Endothelial cell of umbilical vein (primary cell): ENCODE measurements at regions of chr4 and their contacts with region 1.

Region 1: GRCh38 chr4:40897557-40898203 is 147.9 kb downstream of the NSUN7 start:
- DNase-seq: peak; percentile 74
- H3K4me3 ChIP-seq: no peak overlapping the region
- H3K27ac ChIP-seq: no peak overlapping the region
- H3K4me1 ChIP-seq: no peaks in the 10 kb centered on the region
- H3K27me3 ChIP-seq: no peaks in the 10 kb centered on the region
- CTCF ChIP-seq: peak; percentile 80 to 81
- POLR2A ChIP-seq: no peak

Region 2: GRCh38 chr4:40736910-40737309 is 160.8 kb before region 1 on chr4:
- CTCF ChIA-PET with region 1: interaction called, 18 read pairs
- POLR2A ChIA-PET with region 1: no interaction called
- dilution Hi-C with region 1: no loop called
- intact Hi-C with region 1: loop called (anchors 1 kb)
- DNase-seq: peak; percentile 30
- H3K4me3 ChIP-seq: no peak overlapping the region
- H3K27ac ChIP-seq: no peak overlapping the region
- H3K4me1 ChIP-seq: no peaks in the 10 kb centered on the region
- H3K27me3 ChIP-seq: peaks cover 0 to 4% of the 10 kb centered on the region in 2 experiments
- CTCF ChIP-seq: no peak
- POLR2A ChIP-seq: no peak

Region 3: DNA sequence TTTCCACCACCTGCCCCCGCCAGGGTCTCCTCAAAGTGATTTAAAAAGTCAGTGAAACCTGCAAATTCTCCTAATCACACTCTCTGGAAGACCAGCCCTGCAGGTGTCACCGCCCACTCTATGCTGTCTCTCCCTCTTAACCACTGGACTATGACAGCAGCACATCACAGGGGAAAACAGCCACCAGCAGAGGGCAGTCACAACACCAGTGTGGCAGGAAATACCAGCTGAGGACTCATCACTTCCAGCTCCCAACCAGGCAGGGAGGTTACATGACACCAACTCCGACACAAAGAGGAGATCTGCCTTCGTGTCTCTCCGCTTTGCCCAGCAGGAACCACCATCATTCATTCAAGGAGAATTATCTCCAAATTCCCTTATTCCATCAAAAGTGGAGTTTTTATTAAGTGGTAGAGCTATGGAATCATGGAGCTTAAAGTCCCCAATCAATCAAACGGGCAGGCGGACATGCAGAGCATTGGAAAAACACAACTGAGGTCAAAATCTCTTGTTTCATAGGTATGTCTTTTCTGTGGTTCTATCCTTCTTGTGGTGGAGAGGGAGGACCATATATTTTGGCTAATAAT is 56.6 kb before region 1 on chr4:
- CTCF ChIA-PET with region 1: interaction called, 16 read pairs
- POLR2A ChIA-PET with region 1: no interaction called
- dilution Hi-C with region 1: no loop called
- intact Hi-C with region 1: loop called (anchors 1 kb)
- DNase-seq: peak; percentile 83
- H3K4me3 ChIP-seq: no peak overlapping the region
- H3K27ac ChIP-seq: peak overlapping the region; percentile 50
- H3K4me1 ChIP-seq: peaks cover 4% of the 10 kb centered on the region
- H3K27me3 ChIP-seq: no peaks in the 10 kb centered on the region
- CTCF ChIP-seq: peak; percentile 76 to 95
- POLR2A ChIP-seq: no peak

Region 4: GRCh38 chr4:40887288-40888131 is 10.2 kb before region 1 on chr4:
- CTCF ChIA-PET with region 1: interaction called, 19 read pairs
- POLR2A ChIA-PET with region 1: interaction called, 4 read pairs
- dilution Hi-C with region 1: no loop called
- intact Hi-C with region 1: no loop called
- DNase-seq: no peak
- H3K4me3 ChIP-seq: no peak overlapping the region
- H3K27ac ChIP-seq: no peak overlapping the region
- H3K4me1 ChIP-seq: no peaks in the 10 kb centered on the region
- H3K27me3 ChIP-seq: no peaks in the 10 kb centered on the region
- CTCF ChIP-seq: no peak
- POLR2A ChIP-seq: no peak